ENCODE measurements at regions of chr3 and their contacts with region 1.

Region 1: GRCh38 chr3:159988617-159989271 is at the start of gene IL12A:
- DNase-seq: peak; percentile 58 to 79
- H3K4me3 ChIP-seq: peak within 1 kb of the TSS; percentile 96
- H3K27ac ChIP-seq: no peak within 1 kb of the TSS
- H3K4me1 ChIP-seq: peaks cover 23% of the 10 kb centered on the region
- H3K27me3 ChIP-seq: no peaks in the 10 kb centered on the region
- CTCF ChIP-seq: peak; percentile 98
- total RNA-seq, gene IL12A: 0.28 and 0.40 TPM in 2 replicates

Region 2: DNA sequence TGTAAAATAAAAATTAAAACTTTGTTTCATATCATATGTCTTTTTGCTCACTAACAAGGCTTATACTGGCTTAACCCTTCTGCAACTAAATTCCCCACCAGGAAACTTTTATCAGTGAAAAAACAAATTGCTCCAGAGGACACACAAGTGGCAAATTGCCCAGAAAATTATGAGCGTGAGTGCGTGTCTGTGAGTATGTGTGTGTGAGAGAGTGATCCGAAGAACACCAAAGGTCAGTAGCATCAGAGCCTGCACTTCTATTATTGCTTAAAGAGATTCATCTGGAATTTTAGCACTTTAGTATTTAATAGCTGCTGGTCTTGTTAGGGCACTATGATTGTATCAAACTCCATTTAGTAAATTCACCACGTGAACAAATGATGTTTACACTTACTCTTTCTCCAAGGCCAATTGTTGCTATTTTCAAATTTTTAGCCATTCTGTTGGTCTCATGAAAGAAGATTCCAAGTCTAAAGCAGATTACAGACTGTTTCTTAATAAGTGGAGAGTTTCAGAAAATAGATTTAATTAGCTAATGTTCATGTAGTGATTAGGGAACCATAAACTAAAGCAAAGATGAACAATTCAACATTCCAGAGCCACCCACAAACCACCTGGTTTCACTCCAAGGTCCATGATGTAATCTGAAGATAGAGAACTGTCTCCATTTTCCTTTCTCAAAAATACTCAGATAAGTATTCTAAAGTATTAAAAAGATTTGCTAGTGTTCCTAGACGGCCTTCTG is 91.2 kb before region 1 on chr3:
- CTCF ChIA-PET with region 1: interaction called, 4 read pairs
- POLR2A ChIA-PET with region 1: no interaction called
- intact Hi-C with region 1: loop called (anchors 5 kb)
- DNase-seq: no peak
- H3K4me3 ChIP-seq: no peak overlapping the region
- H3K27ac ChIP-seq: no peak overlapping the region
- H3K4me1 ChIP-seq: no peaks in the 10 kb centered on the region
- H3K27me3 ChIP-seq: no peaks in the 10 kb centered on the region
- CTCF ChIP-seq: no peak

Region 3: GRCh38 chr3:159964166-159964973 is 24.4 kb before region 1 on chr3:
- CTCF ChIA-PET with region 1: interaction called, 15 read pairs
- POLR2A ChIA-PET with region 1: no interaction called
- intact Hi-C with region 1: no loop called
- DNase-seq: peak in 1 of 2 experiments; percentile 83
- H3K4me3 ChIP-seq: no peak overlapping the region
- H3K27ac ChIP-seq: peak overlapping the region; percentile 79
- H3K4me1 ChIP-seq: peaks cover 15% of the 10 kb centered on the region
- H3K27me3 ChIP-seq: no peaks in the 10 kb centered on the region
- CTCF ChIP-seq: no peak

Measured in PC-9 (cell line).